B cell (primary cell): ENCODE measurements at regions of chr20 and their contacts with region 1.

Region 1: GRCh38 chr20:17536944-17537444 is 5.8 kb upstream of the BFSP1 start:
- DNase-seq: peak; percentile 78
- ATAC-seq: peak; percentile 90
- H3K4me3 ChIP-seq: no peak overlapping the region
- H3K4me3 Mint-ChIP-seq: no peak overlapping the region
- H3K27ac ChIP-seq: no peak overlapping the region
- H3K27ac Mint-ChIP-seq: no peak overlapping the region
- H3K4me1 ChIP-seq: no peaks in the 10 kb centered on the region
- H3K4me1 Mint-ChIP-seq: no peaks in the 10 kb centered on the region
- H3K27me3 ChIP-seq: peaks cover 0 to 15% (median 2%) of the 10 kb centered on the region in 4 experiments
- H3K27me3 Mint-ChIP-seq: peaks cover 39% of the 10 kb centered on the region
- CTCF ChIP-seq: peak; percentile 87

Region 2: GRCh38 chr20:17569616-17570346 is 32.8 kb after region 1 on chr20 and contains the start of gene DSTN:
- CTCF ChIA-PET with region 1: interaction called, 8 read pairs
- POLR2A ChIA-PET with region 1: no interaction called
- intact Hi-C with region 1: loop called (anchors 2 kb)
- DNase-seq: peak; percentile 93
- ATAC-seq: peak; percentile 91
- H3K4me3 ChIP-seq: peak within 1 kb of the TSS; percentile 77 to 97 (median 83)
- H3K4me3 Mint-ChIP-seq: peak within 1 kb of the TSS; percentile 94
- H3K27ac ChIP-seq: peak within 1 kb of the TSS in 1 of 2 donors; percentile 72
- H3K27ac Mint-ChIP-seq: peak within 1 kb of the TSS; percentile 89
- H3K4me1 ChIP-seq: peaks cover 11 to 14% of the 10 kb centered on the region in 2 donors
- H3K4me1 Mint-ChIP-seq: peaks cover 20% of the 10 kb centered on the region
- H3K27me3 ChIP-seq: peaks cover 0 to 12% (median 2%) of the 10 kb centered on the region in 4 experiments
- H3K27me3 Mint-ChIP-seq: peaks cover 8% of the 10 kb centered on the region
- CTCF ChIP-seq: no peak
- total RNA-seq, gene DSTN: 12.9 and 13.4 TPM in 2 replicates

Region 3: GRCh38 chr20:17648791-17649730 is 112.1 kb after region 1 on chr20:
- CTCF ChIA-PET with region 1: interaction called, 10 read pairs
- POLR2A ChIA-PET with region 1: no interaction called
- intact Hi-C with region 1: loop called (anchors 1 kb)
- DNase-seq: peak; percentile 61
- ATAC-seq: peak; percentile 81
- H3K4me3 ChIP-seq: peak overlapping the region in 1 of 5 experiments; percentile 6
- H3K4me3 Mint-ChIP-seq: peak overlapping the region; percentile 4
- H3K27ac ChIP-seq: no peak overlapping the region
- H3K27ac Mint-ChIP-seq: no peak overlapping the region
- H3K4me1 ChIP-seq: peaks cover 8 to 18% of the 10 kb centered on the region in 2 donors
- H3K4me1 Mint-ChIP-seq: peaks cover 22% of the 10 kb centered on the region
- H3K27me3 ChIP-seq: no peaks in the 10 kb centered on the region
- H3K27me3 Mint-ChIP-seq: no peaks in the 10 kb centered on the region
- CTCF ChIP-seq: peak; percentile 46

Region 4: GRCh38 chr20:17710379-17711266 is 173.6 kb after region 1 on chr20:
- CTCF ChIA-PET with region 1: no interaction called
- POLR2A ChIA-PET with region 1: no interaction called
- intact Hi-C with region 1: no loop called
- DNase-seq: no peak
- ATAC-seq: peak; percentile 28
- H3K4me3 ChIP-seq: no peak overlapping the region
- H3K4me3 Mint-ChIP-seq: no peak overlapping the region
- H3K27ac ChIP-seq: no peak overlapping the region
- H3K27ac Mint-ChIP-seq: no peak overlapping the region
- H3K4me1 ChIP-seq: no peaks in the 10 kb centered on the region
- H3K4me1 Mint-ChIP-seq: no peaks in the 10 kb centered on the region
- H3K27me3 ChIP-seq: no peaks in the 10 kb centered on the region
- H3K27me3 Mint-ChIP-seq: peaks cover 3% of the 10 kb centered on the region
- CTCF ChIP-seq: no peak

Region 5: DNA sequence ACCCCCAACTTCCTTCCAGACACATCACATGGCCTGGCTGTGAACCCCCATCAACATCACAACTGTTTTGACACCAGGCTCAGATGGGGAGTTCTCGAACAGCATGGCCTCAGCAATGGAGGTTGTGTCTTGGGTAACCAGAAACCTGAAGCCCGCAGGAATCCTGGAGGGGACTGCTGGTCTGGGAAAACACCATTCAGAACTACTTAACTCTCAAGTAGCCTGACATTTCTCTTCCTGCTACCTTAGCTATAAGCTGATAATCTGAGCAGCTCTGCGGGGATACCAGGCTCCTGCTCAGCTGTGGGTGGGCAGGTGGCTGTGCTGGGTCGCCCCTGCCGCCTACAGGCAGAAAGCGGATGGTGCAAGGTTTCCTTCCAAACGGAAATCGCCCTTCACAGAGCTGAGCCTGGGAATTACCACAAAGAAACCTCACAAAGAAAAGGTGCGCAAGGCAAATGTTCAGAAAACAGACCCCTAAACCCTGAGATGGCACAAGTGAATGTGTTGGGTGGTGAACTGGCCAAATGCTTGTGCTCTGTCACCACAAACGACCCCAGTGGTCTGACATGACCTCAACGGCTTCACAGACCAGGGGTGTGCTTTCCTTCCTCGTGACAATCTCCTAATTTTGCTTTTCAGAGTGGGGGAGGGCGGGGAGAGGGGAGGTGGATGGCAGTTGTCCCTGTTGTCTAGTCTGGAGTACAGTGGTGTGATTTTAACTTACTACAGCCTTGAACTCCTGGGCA is 402.1 kb after region 1 on chr20:
- CTCF ChIA-PET with region 1: interaction called, 35 read pairs
- POLR2A ChIA-PET with region 1: interaction called, 7 read pairs
- intact Hi-C with region 1: loop called (anchors 1 kb)
- DNase-seq: peak; percentile 79
- ATAC-seq: peak; percentile 89
- H3K4me3 ChIP-seq: no peak overlapping the region
- H3K4me3 Mint-ChIP-seq: peak overlapping the region; percentile 54
- H3K27ac ChIP-seq: peak overlapping the region in 1 of 2 donors; percentile 55
- H3K27ac Mint-ChIP-seq: peak overlapping the region; percentile 56
- H3K4me1 ChIP-seq: peaks cover 24 to 26% of the 10 kb centered on the region in 2 donors
- H3K4me1 Mint-ChIP-seq: peaks cover 36% of the 10 kb centered on the region
- H3K27me3 ChIP-seq: no peaks in the 10 kb centered on the region
- H3K27me3 Mint-ChIP-seq: no peaks in the 10 kb centered on the region
- CTCF ChIP-seq: peak; percentile 88

Region 6: GRCh38 chr20:18019070-18019469 is 482.1 kb after region 1 on chr20:
- CTCF ChIA-PET with region 1: interaction called, 3 read pairs
- POLR2A ChIA-PET with region 1: no interaction called
- intact Hi-C with region 1: loop called (anchors 1 kb)
- DNase-seq: peak; percentile 47
- ATAC-seq: peak; percentile 80
- H3K4me3 ChIP-seq: no peak overlapping the region
- H3K4me3 Mint-ChIP-seq: no peak overlapping the region
- H3K27ac ChIP-seq: no peak overlapping the region
- H3K27ac Mint-ChIP-seq: no peak overlapping the region
- H3K4me1 ChIP-seq: no peaks in the 10 kb centered on the region
- H3K4me1 Mint-ChIP-seq: peaks cover 3% of the 10 kb centered on the region
- H3K27me3 ChIP-seq: peaks cover 0 to 2% (median 0%) of the 10 kb centered on the region in 4 experiments
- H3K27me3 Mint-ChIP-seq: no peaks in the 10 kb centered on the region
- CTCF ChIP-seq: peak; percentile 68